Activated CD4-positive, alpha-beta T cell treated with anti-CD3 and anti-CD28 coated beads for 36 hours (primary cell): ENCODE measurements at regions of chr16 and their contacts with region 1.

Region 1: GRCh38 chr16:813204-813915 is 12.8 kb upstream of the GNG13 start:
- DNase-seq: peak; percentile 76
- ATAC-seq: peak; percentile 87
- H3K4me3 Mint-ChIP-seq: no peak overlapping the region
- H3K27ac Mint-ChIP-seq: no peak overlapping the region
- H3K4me1 Mint-ChIP-seq: peaks cover 4% of the 10 kb centered on the region
- H3K27me3 Mint-ChIP-seq: peaks cover 15% of the 10 kb centered on the region

Region 2: DNA sequence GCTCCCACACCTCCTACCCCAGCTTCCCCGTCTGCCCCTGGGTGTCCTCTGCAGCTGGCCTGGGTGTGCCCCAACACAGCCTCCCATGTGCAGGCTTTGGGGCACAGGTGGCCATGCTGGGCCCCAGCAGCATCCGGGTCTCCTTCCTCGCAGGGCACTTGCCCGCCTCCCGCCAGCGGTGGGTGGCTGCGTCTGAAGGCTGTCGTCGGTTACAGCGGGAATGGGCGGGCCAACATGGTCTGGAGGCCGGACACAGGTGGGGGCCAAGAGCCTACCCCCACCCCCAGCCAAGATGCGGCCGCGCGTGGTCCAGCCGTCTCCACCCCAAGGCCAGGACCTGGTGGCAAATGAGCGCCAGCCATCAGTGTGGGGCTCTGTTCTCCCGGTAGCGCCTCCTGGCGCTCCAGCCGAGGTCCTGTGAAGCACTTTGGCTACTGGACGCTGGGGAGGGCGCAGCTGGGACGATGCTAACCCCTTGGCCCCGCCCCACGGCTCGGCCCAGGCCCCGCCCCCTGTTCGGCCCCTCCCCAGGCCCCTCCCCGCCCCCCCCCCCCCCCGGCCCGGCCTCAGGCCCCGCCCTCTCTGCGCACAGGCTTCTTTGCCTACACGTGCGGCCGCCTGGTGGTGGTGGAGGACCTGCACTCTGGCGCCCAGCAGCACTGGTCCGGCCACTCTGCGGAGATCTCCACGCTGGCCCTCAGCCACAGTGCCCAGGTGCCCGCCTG is 152.7 kb before region 1 on chr16:
- CTCF ChIA-PET with region 1: no interaction called
- POLR2A ChIA-PET with region 1: no interaction called
- intact Hi-C with region 1: no loop called
- DNase-seq: peak; percentile 87
- ATAC-seq: peak; percentile 85
- H3K4me3 Mint-ChIP-seq: peak overlapping the region; percentile 35
- H3K27ac Mint-ChIP-seq: peak overlapping the region; percentile 60
- H3K4me1 Mint-ChIP-seq: peaks cover 5% of the 10 kb centered on the region
- H3K27me3 Mint-ChIP-seq: no peaks in the 10 kb centered on the region

Region 3: GRCh38 chr16:867461-868385 is 54.4 kb after region 1 on chr16:
- CTCF ChIA-PET with region 1: no interaction called
- POLR2A ChIA-PET with region 1: no interaction called
- intact Hi-C with region 1: no loop called
- DNase-seq: no peak
- ATAC-seq: no peak
- H3K4me3 Mint-ChIP-seq: no peak overlapping the region
- H3K27ac Mint-ChIP-seq: no peak overlapping the region
- H3K4me1 Mint-ChIP-seq: no peaks in the 10 kb centered on the region
- H3K27me3 Mint-ChIP-seq: no peaks in the 10 kb centered on the region

Region 4: DNA sequence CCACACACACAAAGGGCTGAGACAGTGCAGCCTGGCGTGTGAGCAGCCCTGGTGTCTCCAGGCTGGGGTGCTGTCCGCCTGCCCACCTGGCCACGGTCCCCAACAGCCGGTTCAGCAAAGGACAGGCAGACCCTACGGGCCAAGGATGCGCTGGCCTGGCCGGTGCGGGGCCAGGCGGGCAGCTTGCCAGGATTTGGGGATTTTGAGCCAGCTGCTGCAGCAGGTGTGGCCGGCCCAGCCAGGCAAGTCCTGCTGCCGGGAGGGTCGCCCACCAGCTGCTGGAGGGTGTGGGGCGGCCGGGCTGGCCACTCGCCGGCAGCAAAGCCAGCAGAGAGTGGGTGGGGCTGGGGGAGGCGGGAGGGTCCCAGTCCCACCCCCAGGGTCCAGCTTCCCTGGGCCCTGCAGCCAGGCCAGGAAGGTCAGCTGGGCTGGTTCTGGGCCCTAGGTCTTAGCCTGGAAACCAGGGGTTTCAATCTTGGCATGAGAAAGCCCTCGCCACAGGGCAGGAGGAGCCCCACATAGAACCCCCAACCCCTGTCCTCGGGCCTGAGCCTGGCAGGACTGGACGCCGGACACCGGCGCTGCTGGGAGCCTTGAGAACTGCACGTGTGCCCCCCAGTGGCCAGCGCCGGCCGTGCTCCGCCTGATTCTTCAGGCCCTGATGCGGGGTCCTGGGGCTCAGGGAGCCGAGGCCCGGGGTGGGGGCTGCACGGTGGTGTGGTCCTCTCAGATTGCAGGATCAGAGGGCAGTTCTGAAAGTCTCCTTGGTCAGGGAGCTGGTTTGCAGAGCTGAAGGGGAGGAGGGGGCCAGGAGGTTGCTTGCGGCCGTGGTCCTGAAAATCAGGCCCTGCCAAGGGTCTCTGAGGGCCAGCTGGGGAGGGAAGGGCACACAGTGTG is 241.5 kb after region 1 on chr16:
- CTCF ChIA-PET with region 1: no interaction called
- POLR2A ChIA-PET with region 1: no interaction called
- intact Hi-C with region 1: loop called (anchors 1 kb)
- DNase-seq: peak; percentile 65
- ATAC-seq: peak; percentile 59
- H3K4me3 Mint-ChIP-seq: no peak overlapping the region
- H3K27ac Mint-ChIP-seq: no peak overlapping the region
- H3K4me1 Mint-ChIP-seq: no peaks in the 10 kb centered on the region
- H3K27me3 Mint-ChIP-seq: peaks cover 3% of the 10 kb centered on the region

Region 5: GRCh38 chr16:1194665-1195392 is 381.5 kb after region 1 on chr16:
- CTCF ChIA-PET with region 1: no interaction called
- POLR2A ChIA-PET with region 1: no interaction called
- intact Hi-C with region 1: loop called in 1 of 2 experiments (anchors 5 kb)
- DNase-seq: peak; percentile 49
- ATAC-seq: peak; percentile 43
- H3K4me3 Mint-ChIP-seq: no peak overlapping the region
- H3K27ac Mint-ChIP-seq: no peak overlapping the region
- H3K4me1 Mint-ChIP-seq: no peaks in the 10 kb centered on the region
- H3K27me3 Mint-ChIP-seq: no peaks in the 10 kb centered on the region